Thyroid gland (tissue), 4 donors: ENCODE measurements at regions of chr5 and their contacts with region 1.

Region 1: DNA sequence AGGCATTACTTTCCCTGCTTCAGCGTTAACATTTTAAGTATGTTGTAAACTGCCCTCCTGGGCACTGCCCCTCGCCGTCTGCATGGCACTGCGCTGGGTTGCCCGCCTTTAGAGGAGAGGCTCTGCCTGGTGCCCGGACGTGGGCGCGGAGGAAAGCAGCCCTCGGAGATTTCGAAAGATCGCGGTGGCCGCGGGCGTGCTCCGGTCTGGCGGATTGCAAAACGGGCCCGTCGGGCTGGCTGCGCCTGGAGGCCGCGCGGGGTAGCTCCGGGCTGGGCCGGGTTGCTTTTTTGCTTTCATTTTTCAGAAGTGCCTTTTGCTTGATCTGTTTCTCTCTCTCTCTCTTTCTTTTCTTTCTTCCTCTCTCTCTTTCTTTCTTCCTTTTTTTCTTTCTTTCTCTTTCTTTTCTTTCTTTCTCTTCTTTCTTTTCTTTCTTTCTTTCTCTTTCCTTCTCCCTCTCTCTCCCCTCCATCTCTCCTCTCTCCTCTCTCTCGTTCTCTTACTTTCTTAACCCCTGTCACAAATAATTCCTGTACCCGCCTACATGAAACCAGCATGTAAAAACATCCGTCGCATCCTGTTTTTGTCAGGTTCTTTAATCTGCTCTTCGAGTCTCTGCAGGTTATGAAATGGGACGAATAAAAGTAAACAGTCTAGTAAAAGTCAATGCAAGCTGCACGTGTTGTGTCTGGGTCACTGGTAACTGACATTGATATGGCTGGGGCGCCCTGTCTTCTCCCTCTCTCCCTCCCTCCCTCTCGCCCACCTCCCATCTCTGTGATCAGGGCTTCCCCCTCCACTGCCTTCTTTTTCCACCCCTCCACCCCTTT is 1.7 kb downstream of the FST start:
- DNase-seq: peak; percentile 70 to 79
- H3K4me3 ChIP-seq: peak overlapping the region in 2 of 3 donors; percentile 43 to 45
- H3K27ac ChIP-seq: peak overlapping the region in 2 of 3 donors; percentile 11 to 48
- H3K4me1 ChIP-seq: peaks cover 0 to 5% of the 10 kb centered on the region in 2 donors
- H3K27me3 ChIP-seq: no peaks in the 10 kb centered on the region
- CTCF ChIP-seq: peak in 4 of 6 experiments; percentile 22 to 49 (median 32)
- POLR2A ChIP-seq: no peak

Region 2: GRCh38 chr5:53201746-53202145 is 280.4 kb before region 1 on chr5:
- intact Hi-C with region 1: no loop called
- DNase-seq: no peak
- H3K4me3 ChIP-seq: no peak overlapping the region
- H3K27ac ChIP-seq: no peak overlapping the region
- H3K4me1 ChIP-seq: no peaks in the 10 kb centered on the region
- H3K27me3 ChIP-seq: no peaks in the 10 kb centered on the region
- CTCF ChIP-seq: no peak
- POLR2A ChIP-seq: no peak

Region 3: GRCh38 chr5:54229041-54229780 is 747.1 kb after region 1 on chr5:
- intact Hi-C with region 1: loop called (anchors 10 kb)
- DNase-seq: peak; percentile 71 to 81
- H3K4me3 ChIP-seq: no peak overlapping the region
- H3K27ac ChIP-seq: no peak overlapping the region
- H3K4me1 ChIP-seq: peaks cover 0 to 6% of the 10 kb centered on the region in 2 donors
- H3K27me3 ChIP-seq: no peaks in the 10 kb centered on the region
- CTCF ChIP-seq: peak; percentile 45 to 85 (median 74)
- POLR2A ChIP-seq: no peak